Caco-2 (cell line): ENCODE measurements at regions of chr7 and their contacts with region 1.

Region 1: GRCh38 chr7:99631295-99632109 is 14.8 kb downstream of the ZSCAN25 start:
- DNase-seq: peak in 1 of 2 experiments; percentile 41
- H3K4me3 ChIP-seq: no peak overlapping the region
- H3K4me3 Mint-ChIP-seq: no peak overlapping the region
- H3K27ac Mint-ChIP-seq: no peak overlapping the region
- H3K4me1 ChIP-seq: no peaks in the 10 kb centered on the region
- H3K4me1 Mint-ChIP-seq: no peaks in the 10 kb centered on the region
- H3K27me3 ChIP-seq: no peaks in the 10 kb centered on the region
- H3K27me3 Mint-ChIP-seq: no peaks in the 10 kb centered on the region
- CTCF ChIP-seq: peak in 1 of 2 experiments; percentile 55

Region 2: DNA sequence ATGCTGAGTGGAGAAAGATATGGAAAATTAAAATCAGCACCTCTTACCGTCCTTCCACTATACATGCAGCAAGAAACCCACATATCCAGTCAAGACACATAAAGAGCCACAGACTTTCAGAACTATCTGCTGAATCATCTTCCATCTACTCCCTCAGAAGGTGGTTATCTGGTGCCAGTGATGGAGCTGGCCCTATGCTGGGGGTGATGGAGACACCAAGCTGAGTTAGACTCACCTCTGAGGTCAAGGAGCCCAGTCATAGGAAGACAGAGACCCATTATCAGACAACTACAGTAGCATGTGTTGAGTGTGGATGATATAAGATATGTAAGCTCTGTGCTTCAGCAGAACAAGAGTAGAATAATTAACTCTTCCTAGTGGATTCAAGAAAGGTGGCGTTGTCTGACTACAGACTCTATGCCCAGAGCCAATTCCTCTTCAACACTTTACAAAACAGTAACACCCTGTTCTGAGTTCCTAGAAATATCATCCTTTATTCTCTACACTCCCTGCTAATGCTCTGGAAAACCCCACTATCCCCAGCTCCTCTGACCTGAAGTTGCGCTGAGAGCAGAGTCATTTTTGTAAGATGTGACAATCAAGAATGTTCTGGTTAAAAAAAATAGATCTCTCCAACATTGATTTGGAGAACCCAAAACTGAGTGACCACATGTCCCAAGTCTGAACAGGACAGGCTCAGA is 34.0 kb after region 1 on chr7:
- CTCF ChIA-PET with region 1: no interaction called
- POLR2A ChIA-PET with region 1: no interaction called
- intact Hi-C with region 1: no loop called
- DNase-seq: no peak
- H3K4me3 ChIP-seq: no peak overlapping the region
- H3K4me3 Mint-ChIP-seq: no peak overlapping the region
- H3K27ac Mint-ChIP-seq: no peak overlapping the region
- H3K4me1 ChIP-seq: no peaks in the 10 kb centered on the region
- H3K4me1 Mint-ChIP-seq: no peaks in the 10 kb centered on the region
- H3K27me3 ChIP-seq: no peaks in the 10 kb centered on the region
- H3K27me3 Mint-ChIP-seq: no peaks in the 10 kb centered on the region
- CTCF ChIP-seq: no peak

Region 3: GRCh38 chr7:99733448-99733847 is 101.9 kb after region 1 on chr7:
- CTCF ChIA-PET with region 1: no interaction called
- POLR2A ChIA-PET with region 1: no interaction called
- intact Hi-C with region 1: loop called (anchors 5 kb)
- DNase-seq: peak in 1 of 2 experiments; percentile 38
- H3K4me3 ChIP-seq: no peak overlapping the region
- H3K4me3 Mint-ChIP-seq: no peak overlapping the region
- H3K27ac Mint-ChIP-seq: no peak overlapping the region
- H3K4me1 ChIP-seq: peaks cover 19% of the 10 kb centered on the region
- H3K4me1 Mint-ChIP-seq: no peaks in the 10 kb centered on the region
- H3K27me3 ChIP-seq: no peaks in the 10 kb centered on the region
- H3K27me3 Mint-ChIP-seq: peaks cover 4% of the 10 kb centered on the region
- CTCF ChIP-seq: peak; percentile 35 to 43

Region 4: DNA sequence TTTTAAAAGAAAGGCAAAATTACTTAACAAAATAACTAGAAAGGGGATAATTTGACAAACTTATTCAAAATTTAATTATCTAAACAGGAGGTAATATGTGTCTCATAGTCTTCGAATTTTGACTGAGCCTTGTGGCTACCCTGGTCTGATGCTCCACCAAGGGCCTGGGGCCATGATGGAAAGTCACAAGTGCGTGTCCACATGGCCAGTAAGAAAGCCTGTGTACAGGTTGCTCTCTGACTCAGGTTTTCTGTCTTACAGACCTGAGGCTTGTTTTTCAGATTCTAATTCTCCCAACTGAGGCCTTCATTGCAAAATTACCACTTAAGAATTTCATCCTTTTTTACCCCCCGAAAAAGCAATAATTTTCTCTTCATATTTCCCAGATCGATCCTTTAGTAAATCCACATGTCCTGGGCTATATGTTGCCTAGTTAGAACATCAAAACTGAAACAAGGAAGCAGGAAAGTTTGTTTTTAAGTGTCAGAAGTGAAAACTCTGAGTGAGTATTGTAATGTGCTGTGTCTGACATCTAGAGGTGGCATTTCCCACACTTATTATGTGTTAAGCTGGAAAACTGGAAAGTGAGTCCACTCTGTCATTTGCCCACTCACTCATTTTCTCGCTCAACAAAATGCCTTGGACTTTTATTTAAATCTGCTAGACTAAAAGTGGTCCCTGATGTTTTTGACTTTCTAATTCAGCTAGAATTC is 206.3 kb after region 1 on chr7:
- CTCF ChIA-PET with region 1: interaction called, 4 read pairs
- POLR2A ChIA-PET with region 1: no interaction called
- intact Hi-C with region 1: loop called (anchors 1 kb)
- DNase-seq: no peak
- H3K4me3 ChIP-seq: no peak overlapping the region
- H3K4me3 Mint-ChIP-seq: no peak overlapping the region
- H3K27ac Mint-ChIP-seq: no peak overlapping the region
- H3K4me1 ChIP-seq: peaks cover 8% of the 10 kb centered on the region
- H3K4me1 Mint-ChIP-seq: peaks cover 17% of the 10 kb centered on the region
- H3K27me3 ChIP-seq: no peaks in the 10 kb centered on the region
- H3K27me3 Mint-ChIP-seq: no peaks in the 10 kb centered on the region
- CTCF ChIP-seq: peak; percentile 36 to 44

Region 5: GRCh38 chr7:99876491-99876890 is 245.0 kb after region 1 on chr7:
- CTCF ChIA-PET with region 1: interaction called, 5 read pairs
- POLR2A ChIA-PET with region 1: no interaction called
- intact Hi-C with region 1: loop called (anchors 1 kb)
- DNase-seq: no peak
- H3K4me3 ChIP-seq: no peak overlapping the region
- H3K4me3 Mint-ChIP-seq: no peak overlapping the region
- H3K27ac Mint-ChIP-seq: no peak overlapping the region
- H3K4me1 ChIP-seq: no peaks in the 10 kb centered on the region
- H3K4me1 Mint-ChIP-seq: no peaks in the 10 kb centered on the region
- H3K27me3 ChIP-seq: no peaks in the 10 kb centered on the region
- H3K27me3 Mint-ChIP-seq: peaks cover 12% of the 10 kb centered on the region
- CTCF ChIP-seq: peak in 1 of 2 experiments; percentile 9